GM12878 (cell line): ENCODE measurements at regions of chr6 and their contacts with region 1.

Region 1: GRCh38 chr6:14129575-14129974 is 12.0 kb downstream of the CD83 start:
- DNase-seq: no peak
- ATAC-seq: peak; percentile 47
- H3K4me3 ChIP-seq: no peak overlapping the region
- H3K27ac ChIP-seq: no peak overlapping the region
- H3K4me1 ChIP-seq: peaks cover 6% of the 10 kb centered on the region
- H3K27me3 ChIP-seq: no peaks in the 10 kb centered on the region
- CTCF ChIP-seq: peak; percentile 41 to 72 (median 56)
- EP300 ChIP-seq: no peak
- POLR2A ChIP-seq: no peak
- RAD21 ChIP-seq: peak; percentile 67

Region 2: DNA sequence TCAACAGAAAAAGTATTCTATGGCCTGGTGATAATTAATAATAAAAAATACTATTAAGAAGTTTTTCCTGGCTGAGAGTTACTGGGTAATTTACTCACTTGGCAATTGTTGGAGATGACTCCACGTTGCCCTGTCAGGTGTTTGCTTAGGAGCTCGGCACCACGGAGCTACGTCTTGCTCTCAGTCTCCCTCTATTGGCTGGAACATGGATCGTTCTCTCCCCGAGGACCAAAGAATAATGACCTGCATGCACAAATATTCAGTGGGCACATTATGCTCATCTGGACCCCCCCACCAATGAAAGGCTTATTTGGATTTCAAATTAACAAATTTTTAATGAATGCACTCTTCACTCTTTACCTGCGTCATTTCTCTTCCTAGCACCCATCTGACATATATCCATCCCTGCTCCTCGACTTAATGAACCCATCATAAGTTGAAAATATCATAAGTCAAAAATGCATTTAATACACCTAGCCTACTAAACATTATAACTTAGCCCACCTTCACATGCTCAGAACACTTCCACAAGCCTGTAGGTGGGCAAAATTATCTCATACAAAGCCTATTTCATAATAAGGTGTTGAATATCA is 83.0 kb before region 1 on chr6:
- CTCF ChIA-PET with region 1: interaction called, 19 read pairs
- POLR2A ChIA-PET with region 1: no interaction called
- RAD21 ChIA-PET with region 1: interaction called, 10 read pairs
- SMC1A ChIA-PET with region 1: interaction called, 23 read pairs
- in situ Hi-C with region 1: no loop called
- intact Hi-C with region 1: no loop called
- DNase-seq: no peak
- ATAC-seq: peak; percentile 94
- H3K4me3 ChIP-seq: no peak overlapping the region
- H3K27ac ChIP-seq: no peak overlapping the region
- H3K4me1 ChIP-seq: no peaks in the 10 kb centered on the region
- H3K27me3 ChIP-seq: peaks cover 2 to 3% of the 10 kb centered on the region in 2 experiments; a peak in 2 of 4 replicates
- CTCF ChIP-seq: peak; percentile 63 to 79 (median 75)
- EP300 ChIP-seq: no peak
- POLR2A ChIP-seq: no peak
- RAD21 ChIP-seq: peak; percentile 64

Region 3: DNA sequence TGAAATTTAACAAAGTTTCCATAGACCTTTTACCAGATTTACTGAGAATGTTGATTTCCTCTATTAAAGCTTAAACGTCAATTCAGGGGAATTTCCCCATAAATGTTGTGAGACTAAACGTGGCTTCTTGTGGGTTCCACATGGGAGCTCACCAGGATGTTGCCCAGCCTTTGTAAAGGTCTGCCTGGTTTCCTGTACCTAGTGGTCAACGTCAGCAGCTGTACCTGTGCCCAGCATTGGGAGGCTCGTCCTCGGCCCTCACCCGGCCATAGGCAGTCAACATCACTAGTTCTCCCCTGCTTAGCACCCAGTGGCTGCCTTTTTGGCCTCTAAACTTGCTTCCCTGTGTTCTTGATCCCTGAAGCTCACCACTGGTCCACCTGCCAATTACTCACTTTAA is 34.1 kb before region 1 on chr6:
- CTCF ChIA-PET with region 1: interaction called, 12 read pairs
- POLR2A ChIA-PET with region 1: interaction called, 5 read pairs
- RAD21 ChIA-PET with region 1: interaction called, 111 read pairs
- SMC1A ChIA-PET with region 1: interaction called, 187 read pairs
- in situ Hi-C with region 1: no loop called
- intact Hi-C with region 1: loop called (anchors 5 kb)
- DNase-seq: no peak
- ATAC-seq: peak; percentile 79
- H3K4me3 ChIP-seq: no peak overlapping the region
- H3K27ac ChIP-seq: peak overlapping the region; percentile 80; the same call in 1 of the 2 replicates
- H3K4me1 ChIP-seq: peaks cover 56% of the 10 kb centered on the region
- H3K27me3 ChIP-seq: no peaks in the 10 kb centered on the region
- CTCF ChIP-seq: no peak
- EP300 ChIP-seq: peak; percentile 87 to 91; a peak in 3 of 4 replicates
- POLR2A ChIP-seq: no peak
- RAD21 ChIP-seq: no peak

Region 4: DNA sequence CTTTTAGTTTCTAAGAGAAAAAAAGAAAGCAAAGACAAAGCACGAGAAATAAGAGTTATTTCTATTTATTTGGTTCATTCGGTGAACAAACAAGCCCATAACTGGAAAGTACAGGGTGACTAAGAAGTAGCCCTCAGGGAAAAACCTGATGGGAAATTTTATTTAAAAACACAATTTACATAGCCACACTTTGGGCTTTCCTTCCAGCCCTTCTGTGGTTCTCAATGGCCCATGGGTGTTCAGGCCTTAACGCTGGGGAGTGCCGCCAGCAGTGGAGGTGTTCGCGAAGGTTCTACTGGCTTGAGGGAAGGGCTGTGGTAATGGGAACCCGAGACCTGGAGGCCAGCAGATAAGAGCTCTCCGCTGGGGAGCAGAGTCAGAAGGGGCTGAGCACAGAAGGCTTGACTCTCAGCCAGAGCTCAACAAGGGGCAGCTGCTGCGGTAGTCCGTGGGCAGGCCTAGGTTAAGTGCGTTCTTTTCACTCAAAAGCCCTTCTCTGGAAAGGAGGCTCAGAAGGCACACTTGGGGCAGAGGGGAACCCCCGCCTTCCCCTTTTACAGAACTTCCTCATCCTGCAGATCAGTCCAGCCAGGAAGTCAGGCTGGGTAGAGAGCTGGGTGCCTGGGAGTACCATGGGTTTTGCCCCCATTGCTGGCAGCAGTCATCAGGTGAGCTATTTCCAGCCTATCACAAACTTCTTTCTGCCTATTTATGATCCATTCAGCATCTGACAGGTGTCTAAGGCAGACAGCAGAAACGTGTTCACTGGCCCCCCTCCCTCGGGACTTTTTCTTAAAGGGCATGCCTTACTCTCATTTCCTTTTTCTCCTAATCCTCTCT is 20.8 kb before region 1 on chr6:
- CTCF ChIA-PET with region 1: interaction called, 19 read pairs
- POLR2A ChIA-PET with region 1: interaction called, 13 read pairs
- RAD21 ChIA-PET with region 1: interaction called, 111 read pairs
- SMC1A ChIA-PET with region 1: interaction called, 22 read pairs
- in situ Hi-C with region 1: no loop called
- intact Hi-C with region 1: no loop called
- DNase-seq: peak; percentile 97
- ATAC-seq: peak; percentile 82
- H3K4me3 ChIP-seq: peak overlapping the region; percentile 32; the same call in 1 of the 2 replicates
- H3K27ac ChIP-seq: peak overlapping the region; percentile 85
- H3K4me1 ChIP-seq: peaks cover 43% of the 10 kb centered on the region
- H3K27me3 ChIP-seq: no peaks in the 10 kb centered on the region
- CTCF ChIP-seq: no peak
- EP300 ChIP-seq: peak; percentile 46 to 66; a peak in 3 of 4 replicates
- POLR2A ChIP-seq: peak; percentile 59
- RAD21 ChIP-seq: no peak

Region 5: GRCh38 chr6:14117158-14118090 is 12.2 kb before region 1 on chr6 and contains the start of gene CD83:
- CTCF ChIA-PET with region 1: interaction called, 16 read pairs
- POLR2A ChIA-PET with region 1: interaction called, 3 read pairs
- RAD21 ChIA-PET with region 1: interaction called, 24 read pairs
- SMC1A ChIA-PET with region 1: interaction called, 22 read pairs
- in situ Hi-C with region 1: no loop called
- intact Hi-C with region 1: no loop called
- DNase-seq: no peak
- ATAC-seq: peak; percentile 68
- H3K4me3 ChIP-seq: peak within 1 kb of the TSS; percentile 93
- H3K27ac ChIP-seq: peak within 1 kb of the TSS; percentile 78
- H3K4me1 ChIP-seq: peaks cover 14% of the 10 kb centered on the region
- H3K27me3 ChIP-seq: no peaks in the 10 kb centered on the region
- CTCF ChIP-seq: peak in 2 of 3 experiments; percentile 11 to 34; a peak in 2 of 6 replicates
- EP300 ChIP-seq: peak in 1 of 2 experiments; percentile 42; a peak in 1 of 4 replicates
- POLR2A ChIP-seq: peak; percentile 100
- RAD21 ChIP-seq: peak; percentile 35
- polyA plus RNA-seq, gene CD83: 120 to 174 TPM

Region 6: GRCh38 chr6:14144678-14145113 is 15.1 kb after region 1 on chr6:
- CTCF ChIA-PET with region 1: interaction called, 204 read pairs
- POLR2A ChIA-PET with region 1: interaction called, 3 read pairs
- RAD21 ChIA-PET with region 1: interaction called, 7 read pairs
- SMC1A ChIA-PET with region 1: interaction called, 31 read pairs
- in situ Hi-C with region 1: no loop called
- intact Hi-C with region 1: no loop called
- DNase-seq: peak; percentile 40
- ATAC-seq: peak; percentile 92
- H3K4me3 ChIP-seq: no peak overlapping the region
- H3K27ac ChIP-seq: no peak overlapping the region
- H3K4me1 ChIP-seq: peaks cover 7% of the 10 kb centered on the region; the same call in 1 of the 2 replicates
- H3K27me3 ChIP-seq: no peaks in the 10 kb centered on the region
- CTCF ChIP-seq: peak; percentile 89 to 96 (median 94)
- EP300 ChIP-seq: no peak
- POLR2A ChIP-seq: no peak
- RAD21 ChIP-seq: peak; percentile 90